Activated CD4-positive, alpha-beta memory T cell treated with anti-CD3 and anti-CD28 coated beads, Interleukin-2, amount 10 ng/mL, durations not matched to agents 7 days and 5 days (primary cell): ENCODE measurements at regions of chr11 and their contacts with region 1.

Region 1: GRCh38 chr11:18105802-18106574 is at the start of gene SAAL1:
- DNase-seq: peak; percentile 91
- H3K4me3 Mint-ChIP-seq: peak within 1 kb of the TSS; percentile 92
- H3K27ac Mint-ChIP-seq: peak within 1 kb of the TSS; percentile 82
- H3K4me1 Mint-ChIP-seq: peaks cover 27% of the 10 kb centered on the region
- H3K27me3 Mint-ChIP-seq: peaks cover 7% of the 10 kb centered on the region
- total RNA-seq, gene SAAL1: 21.0 to 21.7 TPM

Region 2: GRCh38 chr11:17991783-17992433 is 114.1 kb before region 1 on chr11:
- CTCF ChIA-PET with region 1: interaction called, 27 read pairs
- POLR2A ChIA-PET with region 1: interaction called, 3 read pairs
- DNase-seq: peak; percentile 58
- H3K4me3 Mint-ChIP-seq: no peak overlapping the region
- H3K27ac Mint-ChIP-seq: no peak overlapping the region
- H3K4me1 Mint-ChIP-seq: no peaks in the 10 kb centered on the region
- H3K27me3 Mint-ChIP-seq: no peaks in the 10 kb centered on the region

Region 3: GRCh38 chr11:18012863-18013781 is 92.9 kb before region 1 on chr11 and contains the start of gene SERGEF:
- CTCF ChIA-PET with region 1: interaction called, 10 read pairs
- POLR2A ChIA-PET with region 1: interaction called, 18 read pairs
- DNase-seq: peak; percentile 96
- H3K4me3 Mint-ChIP-seq: peak within 1 kb of the TSS; percentile 99
- H3K27ac Mint-ChIP-seq: peak within 1 kb of the TSS; percentile 92
- H3K4me1 Mint-ChIP-seq: peaks cover 32% of the 10 kb centered on the region
- H3K27me3 Mint-ChIP-seq: no peaks in the 10 kb centered on the region
- total RNA-seq, gene SERGEF: 33.9 to 34.2 TPM

Region 4: DNA sequence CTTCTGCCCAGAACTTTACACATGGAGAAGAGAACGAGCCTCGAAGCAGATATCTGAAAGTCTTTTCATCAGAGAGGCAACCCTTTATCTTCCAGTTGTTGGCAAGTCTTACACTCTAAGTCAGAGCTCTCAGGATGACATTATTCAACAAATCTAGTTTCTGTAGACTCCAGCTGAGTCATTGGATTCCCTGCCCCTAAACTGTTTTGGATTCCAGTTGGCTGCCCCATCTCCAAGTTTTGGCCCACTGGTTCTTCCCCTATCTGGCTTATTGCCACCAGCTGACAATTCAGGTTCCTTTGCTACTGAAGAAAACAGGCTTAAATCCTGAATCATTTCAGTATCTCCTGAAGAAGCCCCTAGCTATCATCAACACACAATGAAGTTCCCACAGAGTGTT is 14.3 kb before region 1 on chr11:
- CTCF ChIA-PET with region 1: interaction called, 28 read pairs
- POLR2A ChIA-PET with region 1: interaction called, 8 read pairs
- DNase-seq: no peak
- H3K4me3 Mint-ChIP-seq: no peak overlapping the region
- H3K27ac Mint-ChIP-seq: no peak overlapping the region
- H3K4me1 Mint-ChIP-seq: no peaks in the 10 kb centered on the region
- H3K27me3 Mint-ChIP-seq: no peaks in the 10 kb centered on the region